K562 (cell line): ENCODE measurements at regions of chr12 and their contacts with region 1.

Region 1: DNA sequence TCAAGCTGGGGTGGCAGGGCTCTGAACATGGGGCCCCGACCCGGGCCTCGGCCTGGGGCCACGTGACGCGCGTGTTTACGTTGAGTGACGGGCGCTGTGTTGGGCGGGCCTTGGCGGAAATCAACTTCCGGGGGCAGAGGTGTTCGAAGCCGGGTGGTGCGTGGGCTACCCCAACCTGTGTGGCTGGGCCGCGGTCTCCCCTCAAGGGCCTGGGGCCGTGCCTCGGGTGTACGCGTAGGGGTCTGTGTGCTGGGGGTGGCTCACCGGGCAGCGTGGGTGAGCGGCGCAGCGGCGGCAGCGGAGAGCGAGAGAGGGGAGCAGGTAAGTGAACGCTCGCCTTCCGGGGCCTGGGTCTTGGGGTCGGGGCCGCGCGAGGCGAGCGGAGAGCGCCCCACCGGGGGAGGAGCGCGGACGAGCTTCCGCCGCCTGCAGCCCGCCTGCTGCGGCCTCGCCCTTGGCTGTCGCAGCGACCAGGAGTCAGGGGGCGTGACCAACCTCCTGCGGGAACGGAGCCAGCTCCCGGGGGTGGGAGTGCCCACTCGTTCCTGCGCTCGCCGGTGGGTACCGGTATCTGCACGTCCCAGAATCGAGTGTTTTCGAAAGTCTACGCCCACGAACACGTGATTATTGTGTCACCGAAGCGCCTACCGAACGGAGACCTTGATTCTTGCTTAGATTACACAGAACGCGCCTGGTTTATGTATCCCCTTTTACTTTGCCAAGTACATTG is at the start of gene CCDC91:
- DNase-seq: peak; percentile 88 to 95 (median 90)
- ATAC-seq: peak; percentile 90
- H3K4me3 ChIP-seq: peak within 1 kb of the TSS; percentile 66
- H3K27ac ChIP-seq: peak within 1 kb of the TSS; percentile 96
- H3K4me1 ChIP-seq: peaks cover 8% of the 10 kb centered on the region in 2 experiments; a peak in 4 of 5 replicates
- H3K27me3 ChIP-seq: no peaks in the 10 kb centered on the region
- CTCF ChIP-seq: peak in 2 of 3 experiments; percentile 10 to 17; a peak in 3 of 6 replicates
- EP300 ChIP-seq: peak; percentile 70
- POLR2A ChIP-seq: peak; percentile 91
- RAD21 ChIP-seq: peak in 1 of 2 experiments; percentile 26; a peak in 2 of 4 replicates
- polyA plus RNA-seq, gene CCDC91: 10.1 to 11.3 TPM

Region 2: GRCh38 chr12:28130625-28131598 is 59.6 kb before region 1 on chr12:
- CTCF ChIA-PET with region 1: no interaction called
- POLR2A ChIA-PET with region 1: interaction called, 8 read pairs
- in situ Hi-C with region 1: no loop called
- intact Hi-C with region 1: loop called (anchors 2 kb)
- DNase-seq: peak; percentile 53 to 96 (median 70)
- ATAC-seq: peak; percentile 95
- H3K4me3 ChIP-seq: no peak overlapping the region
- H3K27ac ChIP-seq: peak overlapping the region; percentile 90
- H3K4me1 ChIP-seq: peaks cover 12 to 66% of the 10 kb centered on the region in 2 experiments
- H3K27me3 ChIP-seq: no peaks in the 10 kb centered on the region
- CTCF ChIP-seq: peak in 1 of 3 experiments; percentile 17; a peak in 2 of 6 replicates
- EP300 ChIP-seq: peak; percentile 95
- POLR2A ChIP-seq: peak; percentile 63; the same call in 1 of the 2 replicates
- RAD21 ChIP-seq: peak; percentile 7 to 30; a peak in 2 of 4 replicates

Region 3: GRCh38 chr12:28242496-28243309 is 52.2 kb after region 1 on chr12:
- CTCF ChIA-PET with region 1: no interaction called
- POLR2A ChIA-PET with region 1: no interaction called
- in situ Hi-C with region 1: no loop called
- intact Hi-C with region 1: loop called (anchors 2 kb)
- DNase-seq: peak; percentile 58 to 95 (median 70)
- ATAC-seq: peak; percentile 95
- H3K4me3 ChIP-seq: peak overlapping the region; percentile 31
- H3K27ac ChIP-seq: peak overlapping the region; percentile 96
- H3K4me1 ChIP-seq: peaks cover 10 to 22% of the 10 kb centered on the region in 2 experiments; a peak in 3 of 5 replicates
- H3K27me3 ChIP-seq: no peaks in the 10 kb centered on the region
- CTCF ChIP-seq: peak in 1 of 3 experiments; percentile 0; a peak in 1 of 6 replicates
- EP300 ChIP-seq: peak; percentile 92
- POLR2A ChIP-seq: no peak
- RAD21 ChIP-seq: peak in 1 of 2 experiments; percentile 1; a peak in 2 of 4 replicates

Region 4: DNA sequence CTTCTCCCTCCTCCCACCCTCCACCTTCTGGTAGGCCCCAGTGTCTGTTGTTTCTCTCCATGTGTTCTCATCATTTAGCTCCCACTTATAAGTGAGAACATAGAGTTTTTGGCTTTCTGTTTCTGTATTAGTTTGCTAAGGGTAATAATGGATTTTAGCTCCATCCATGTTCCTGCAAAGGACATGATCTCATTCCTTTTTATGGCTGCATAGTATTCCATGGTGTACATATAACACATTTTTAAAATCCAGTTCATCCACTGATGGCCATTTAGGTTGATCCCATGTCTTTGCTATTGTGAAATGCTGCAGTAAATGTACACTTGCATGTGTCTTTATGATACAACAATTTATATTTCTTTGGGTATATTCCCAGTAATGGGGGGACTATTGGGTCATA is 95.9 kb after region 1 on chr12:
- CTCF ChIA-PET with region 1: no interaction called
- POLR2A ChIA-PET with region 1: interaction called, 3 read pairs
- in situ Hi-C with region 1: no loop called
- intact Hi-C with region 1: loop called (anchors 10 kb)
- DNase-seq: no peak
- ATAC-seq: no peak
- H3K4me3 ChIP-seq: no peak overlapping the region
- H3K27ac ChIP-seq: no peak overlapping the region
- H3K4me1 ChIP-seq: no peaks in the 10 kb centered on the region
- H3K27me3 ChIP-seq: no peaks in the 10 kb centered on the region
- CTCF ChIP-seq: no peak
- EP300 ChIP-seq: no peak
- POLR2A ChIP-seq: no peak
- RAD21 ChIP-seq: no peak

Region 5: DNA sequence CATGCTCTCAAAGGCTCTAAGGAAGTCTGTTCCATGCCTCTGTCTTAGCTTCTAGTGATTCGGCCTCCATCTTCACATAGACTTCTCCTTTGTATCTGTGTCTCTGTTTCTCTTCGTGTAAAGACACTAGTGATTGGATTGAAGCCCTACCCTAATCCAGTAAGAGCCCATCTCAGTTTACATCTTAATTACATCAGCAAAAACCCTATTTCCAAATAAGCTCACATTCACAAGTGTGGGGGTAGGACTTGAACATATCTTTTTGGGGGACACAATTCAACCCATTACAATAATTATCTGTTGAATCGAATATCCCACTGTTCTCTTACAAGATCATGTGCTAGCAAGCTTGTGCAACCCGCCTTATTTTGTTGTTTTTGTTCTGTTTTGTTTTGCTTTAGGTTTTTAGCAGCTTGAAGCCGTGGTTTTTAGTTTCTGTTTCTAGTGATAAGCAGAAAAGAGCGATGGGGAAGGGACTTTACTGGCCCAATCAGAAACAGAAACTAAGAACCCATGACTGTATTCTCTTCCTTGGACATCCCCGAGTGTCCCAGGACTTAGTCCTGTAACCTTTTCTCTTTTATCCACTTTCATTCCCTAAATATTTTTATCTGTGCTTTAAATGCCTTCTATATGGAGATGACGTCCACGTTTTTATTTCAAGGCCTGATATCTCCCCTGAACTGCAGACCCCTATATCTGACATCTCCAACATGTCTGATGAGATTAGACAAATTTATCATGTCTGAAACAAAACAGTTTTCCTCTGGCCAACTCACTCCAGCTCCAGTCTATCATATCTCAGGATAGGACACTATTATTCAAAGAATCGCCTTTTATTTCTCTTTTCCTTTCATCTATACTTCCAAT is 352.8 kb after region 1 on chr12:
- CTCF ChIA-PET with region 1: no interaction called
- POLR2A ChIA-PET with region 1: interaction called, 3 read pairs
- in situ Hi-C with region 1: no loop called
- intact Hi-C with region 1: loop called (anchors 5 kb)
- DNase-seq: peak in 2 of 4 experiments; percentile 19 to 36
- ATAC-seq: peak; percentile 85
- H3K4me3 ChIP-seq: peak overlapping the region; percentile 25
- H3K27ac ChIP-seq: peak overlapping the region; percentile 65
- H3K4me1 ChIP-seq: peaks cover 0 to 8% of the 10 kb centered on the region in 2 experiments; a peak in 2 of 5 replicates
- H3K27me3 ChIP-seq: no peaks in the 10 kb centered on the region
- CTCF ChIP-seq: no peak
- EP300 ChIP-seq: 0 out of 2 replicates have a peak, but pooled peaks have one; percentile 31
- POLR2A ChIP-seq: no peak
- RAD21 ChIP-seq: no peak; a peak in 1 of 4 replicates

Region 6: GRCh38 chr12:28699029-28699428 is 508.5 kb after region 1 on chr12:
- CTCF ChIA-PET with region 1: no interaction called
- POLR2A ChIA-PET with region 1: no interaction called
- in situ Hi-C with region 1: no loop called
- intact Hi-C with region 1: no loop called
- DNase-seq: no peak
- ATAC-seq: no peak
- H3K4me3 ChIP-seq: no peak overlapping the region
- H3K27ac ChIP-seq: no peak overlapping the region
- H3K4me1 ChIP-seq: no peaks in the 10 kb centered on the region
- H3K27me3 ChIP-seq: no peaks in the 10 kb centered on the region
- CTCF ChIP-seq: no peak
- EP300 ChIP-seq: no peak
- POLR2A ChIP-seq: no peak
- RAD21 ChIP-seq: no peak